PC-3 (cell line): ENCODE measurements at regions of chr1 and their contacts with region 1.

Region 1: DNA sequence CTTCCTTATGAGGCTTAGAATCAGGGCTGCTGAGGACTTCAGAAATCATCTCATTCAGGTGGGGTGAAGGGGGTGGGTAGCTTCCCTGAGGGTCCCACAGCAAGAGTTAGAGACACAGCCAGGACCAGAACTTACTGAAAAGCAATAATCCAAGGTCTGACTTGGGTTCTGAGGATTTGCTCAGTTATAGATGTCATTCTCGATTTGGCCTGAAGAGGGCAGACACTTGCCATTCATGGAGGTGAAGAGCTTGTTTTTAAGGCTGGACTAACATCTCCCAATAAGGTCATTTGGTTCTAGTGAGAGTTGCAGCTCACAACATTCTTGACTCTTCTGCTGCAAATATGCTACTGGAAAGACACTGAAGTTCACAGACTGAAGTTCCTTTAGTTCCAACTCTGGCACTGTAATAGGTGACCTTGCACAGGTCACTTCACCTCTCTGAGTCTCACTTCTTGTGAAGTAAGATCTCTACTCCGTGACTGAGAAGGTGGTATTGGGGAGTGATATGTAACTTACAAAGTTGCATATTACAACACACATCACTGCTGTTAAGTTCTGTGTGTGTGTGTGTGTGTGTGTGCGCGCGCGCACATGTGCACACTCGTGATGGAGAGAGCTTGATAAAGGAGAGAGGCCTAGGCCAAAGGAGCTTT is 69.8 kb upstream of the DIRAS3 start:
- DNase-seq: peak; percentile 89
- ATAC-seq: peak; percentile 58
- H3K4me3 ChIP-seq: no peak overlapping the region
- H3K27ac ChIP-seq: no peak overlapping the region
- H3K4me1 ChIP-seq: peaks cover 9% of the 10 kb centered on the region; the same call in 1 of the 2 replicates
- H3K27me3 ChIP-seq: no peaks in the 10 kb centered on the region
- CTCF ChIP-seq: peak; percentile 87

Region 2: DNA sequence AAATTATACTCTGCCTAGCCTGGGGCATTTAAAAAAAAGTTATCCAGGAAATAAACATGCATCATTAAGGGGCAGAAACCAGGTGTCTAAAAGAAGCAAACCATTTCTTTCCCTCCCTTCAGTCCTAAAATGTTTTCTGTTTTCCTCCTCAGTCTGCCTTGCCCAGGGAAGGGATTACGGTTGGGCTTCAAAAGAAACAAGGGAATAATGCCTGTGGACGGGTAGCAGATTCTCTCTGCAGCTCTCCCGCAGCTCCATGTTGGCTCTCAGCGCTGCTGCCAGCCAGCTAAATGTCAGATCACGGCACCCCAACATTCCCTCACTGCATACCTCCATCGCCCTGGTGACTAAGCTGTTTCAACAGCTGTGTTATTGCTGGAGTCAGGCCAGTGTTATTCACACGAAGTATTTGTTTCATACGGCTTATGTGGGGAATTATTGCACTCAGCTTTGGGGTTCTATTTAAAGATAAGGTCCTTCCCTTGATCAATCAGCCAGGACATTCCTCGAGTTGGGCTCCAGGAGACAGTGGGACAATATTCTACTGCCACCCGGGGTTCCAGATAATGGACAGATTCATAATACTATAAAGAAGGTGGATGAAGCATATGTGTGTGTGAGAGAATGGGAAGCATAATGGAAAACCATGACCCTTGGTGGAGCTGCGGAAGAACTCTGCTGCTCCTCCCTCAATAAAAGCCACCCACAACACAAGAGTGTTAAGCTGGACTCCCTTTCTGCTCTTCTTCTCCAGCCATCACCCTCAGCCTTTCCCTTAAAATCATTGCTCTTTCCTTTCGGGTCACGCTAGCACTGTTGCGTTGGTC is 53.9 kb after region 1 on chr1:
- CTCF ChIA-PET with region 1: interaction called, 3 read pairs
- POLR2A ChIA-PET with region 1: no interaction called
- intact Hi-C with region 1: loop called (anchors 5 kb)
- DNase-seq: peak; percentile 85
- ATAC-seq: peak; percentile 50
- H3K4me3 ChIP-seq: peak overlapping the region; percentile 44
- H3K27ac ChIP-seq: 0 out of 2 replicates have a peak overlapping the region, but pooled peaks have one; percentile 13
- H3K4me1 ChIP-seq: peaks cover 57% of the 10 kb centered on the region
- H3K27me3 ChIP-seq: no peaks in the 10 kb centered on the region
- CTCF ChIP-seq: no peak

Region 3: DNA sequence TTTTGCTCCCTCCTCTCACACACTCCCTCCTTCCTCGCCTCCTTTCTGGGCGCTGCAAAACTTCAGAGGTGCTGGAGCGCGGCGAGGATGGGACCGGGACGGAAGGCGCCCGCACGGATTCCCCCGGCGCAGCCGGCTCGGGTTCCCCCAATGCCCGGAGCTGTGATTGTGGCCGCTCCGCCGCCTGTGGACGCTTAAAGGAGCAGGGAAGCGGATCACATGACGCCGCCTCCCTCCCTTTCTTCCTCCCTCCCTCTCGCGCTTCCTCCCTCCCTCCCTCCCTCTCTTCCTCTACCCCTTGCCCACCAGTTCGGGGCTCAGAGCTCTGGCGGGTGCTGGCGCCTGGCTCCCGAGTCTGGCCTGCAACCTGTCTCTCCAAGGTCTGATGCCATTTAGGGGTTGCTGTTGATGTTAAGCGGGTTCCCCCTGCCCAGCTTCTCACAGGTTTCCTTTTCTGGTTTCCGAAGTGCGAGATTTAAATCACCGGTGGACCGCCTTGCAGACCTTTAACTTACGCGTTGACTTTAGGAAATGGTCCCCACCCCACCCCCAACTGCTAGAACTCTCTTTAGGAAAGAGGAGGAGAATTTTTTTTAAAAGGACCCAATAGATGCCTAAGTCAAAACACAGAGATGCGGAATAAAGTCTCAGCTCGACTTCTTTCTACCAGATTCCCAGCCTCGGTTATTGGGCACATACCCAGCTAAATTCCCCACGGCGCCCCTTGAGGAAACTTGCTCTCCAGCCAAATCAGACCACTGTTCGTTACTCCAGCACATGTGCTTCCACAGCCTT is 112.3 kb after region 1 on chr1 and contains the start of gene WLS:
- CTCF ChIA-PET with region 1: interaction called, 3 read pairs
- POLR2A ChIA-PET with region 1: interaction called, 6 read pairs
- intact Hi-C with region 1: loop called (anchors 2 kb)
- DNase-seq: peak; percentile 66
- ATAC-seq: peak; percentile 75
- H3K4me3 ChIP-seq: peak within 1 kb of the TSS; percentile 93
- H3K27ac ChIP-seq: no peak within 1 kb of the TSS
- H3K4me1 ChIP-seq: peaks cover 25% of the 10 kb centered on the region; the same call in 1 of the 2 replicates
- H3K27me3 ChIP-seq: no peaks in the 10 kb centered on the region
- CTCF ChIP-seq: no peak
- total RNA-seq, gene WLS: 15.3 and 19.1 TPM in 2 replicates

Region 4: GRCh38 chr1:68346188-68346808 is 226.0 kb after region 1 on chr1:
- CTCF ChIA-PET with region 1: interaction called, 11 read pairs
- POLR2A ChIA-PET with region 1: no interaction called
- intact Hi-C with region 1: loop called (anchors 1 kb)
- DNase-seq: peak; percentile 58
- ATAC-seq: 0 out of 2 replicates have a peak, but pooled peaks have one; percentile 22
- H3K4me3 ChIP-seq: no peak overlapping the region
- H3K27ac ChIP-seq: no peak overlapping the region
- H3K4me1 ChIP-seq: no peaks in the 10 kb centered on the region
- H3K27me3 ChIP-seq: 0 out of 2 replicates have a peak, but pooled peaks cover 4% of the 10 kb centered on the region
- CTCF ChIP-seq: peak; percentile 80

Region 5: DNA sequence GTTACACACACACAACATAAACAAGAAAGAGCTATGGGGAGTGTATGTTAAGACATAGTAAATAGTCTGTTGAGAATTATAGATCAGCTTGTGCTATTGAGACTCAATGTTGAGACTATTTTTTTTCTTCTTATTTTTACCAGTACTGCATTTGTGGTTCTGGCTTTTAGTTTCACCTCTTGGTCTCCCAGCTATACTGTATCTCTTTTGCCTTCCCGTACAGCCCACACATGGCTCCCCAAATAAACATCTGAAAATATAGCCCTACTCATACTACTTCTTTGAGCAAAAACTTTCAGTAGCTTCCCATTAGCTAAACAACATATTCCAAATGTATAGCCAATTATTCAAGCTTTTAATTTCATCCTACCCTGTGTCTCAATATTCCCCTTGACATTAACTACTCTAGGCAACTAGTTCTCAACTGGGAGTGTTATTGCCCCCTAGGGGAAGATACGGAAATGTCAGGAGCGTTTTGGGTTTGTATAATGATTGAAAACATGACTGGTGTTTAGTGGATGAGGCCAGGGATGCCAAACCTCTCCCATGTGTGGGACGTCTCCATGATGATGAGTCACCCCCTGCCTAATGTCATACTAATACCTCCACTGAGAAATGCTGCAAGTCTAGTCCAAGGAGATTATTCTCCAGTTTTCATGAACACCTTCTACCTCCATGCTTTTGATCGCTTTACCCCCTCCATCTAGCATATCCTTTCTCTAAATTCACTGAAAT is 322.7 kb after region 1 on chr1:
- CTCF ChIA-PET with region 1: interaction called, 3 read pairs
- POLR2A ChIA-PET with region 1: no interaction called
- intact Hi-C with region 1: loop called (anchors 1 kb)
- DNase-seq: peak; percentile 94
- ATAC-seq: peak; percentile 74
- H3K4me3 ChIP-seq: no peak overlapping the region
- H3K27ac ChIP-seq: no peak overlapping the region
- H3K4me1 ChIP-seq: peaks cover 4% of the 10 kb centered on the region; the same call in 1 of the 2 replicates
- H3K27me3 ChIP-seq: no peaks in the 10 kb centered on the region
- CTCF ChIP-seq: peak; percentile 83

Region 6: DNA sequence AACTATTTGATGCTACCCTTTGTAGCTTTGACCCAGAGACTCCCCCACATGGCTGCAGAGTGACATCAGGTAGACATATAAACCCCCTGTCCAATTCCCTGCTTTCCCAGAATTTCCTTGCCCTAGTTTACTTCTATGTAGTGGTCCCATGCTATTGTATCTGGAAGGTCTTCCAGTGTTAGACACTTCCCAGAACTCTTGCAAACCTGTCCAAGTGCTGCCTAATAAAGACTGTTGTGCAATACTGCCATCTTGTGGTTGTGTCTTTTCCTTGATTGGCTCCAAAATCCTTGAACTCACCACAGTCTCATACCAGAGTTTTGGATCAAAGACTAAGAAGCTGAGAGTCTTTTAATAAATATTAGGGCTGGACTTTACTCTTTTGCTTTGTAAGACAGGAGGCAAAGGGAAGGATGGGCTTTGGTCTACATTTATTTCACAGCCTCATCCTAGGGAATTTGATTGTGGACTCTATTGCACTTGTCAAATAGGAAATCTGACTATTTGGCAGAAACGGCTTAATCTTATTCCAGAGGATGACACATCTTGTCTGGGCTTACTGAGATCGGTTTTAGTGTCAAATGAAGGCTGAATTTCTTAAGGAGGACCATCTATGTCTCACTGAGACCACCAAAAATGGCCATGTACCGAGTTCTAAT is 1617.4 kb after region 1 on chr1:
- CTCF ChIA-PET with region 1: no interaction called
- POLR2A ChIA-PET with region 1: no interaction called
- intact Hi-C with region 1: loop called (anchors 5 kb)
- DNase-seq: peak; percentile 79
- ATAC-seq: peak; percentile 77
- H3K4me3 ChIP-seq: no peak overlapping the region
- H3K27ac ChIP-seq: no peak overlapping the region
- H3K4me1 ChIP-seq: no peaks in the 10 kb centered on the region
- H3K27me3 ChIP-seq: peaks cover 33% of the 10 kb centered on the region
- CTCF ChIP-seq: peak; percentile 87